Gastrocnemius medialis (tissue), 4 donors: ENCODE measurements at regions of chr10 and their contacts with region 1.

Region 1: DNA sequence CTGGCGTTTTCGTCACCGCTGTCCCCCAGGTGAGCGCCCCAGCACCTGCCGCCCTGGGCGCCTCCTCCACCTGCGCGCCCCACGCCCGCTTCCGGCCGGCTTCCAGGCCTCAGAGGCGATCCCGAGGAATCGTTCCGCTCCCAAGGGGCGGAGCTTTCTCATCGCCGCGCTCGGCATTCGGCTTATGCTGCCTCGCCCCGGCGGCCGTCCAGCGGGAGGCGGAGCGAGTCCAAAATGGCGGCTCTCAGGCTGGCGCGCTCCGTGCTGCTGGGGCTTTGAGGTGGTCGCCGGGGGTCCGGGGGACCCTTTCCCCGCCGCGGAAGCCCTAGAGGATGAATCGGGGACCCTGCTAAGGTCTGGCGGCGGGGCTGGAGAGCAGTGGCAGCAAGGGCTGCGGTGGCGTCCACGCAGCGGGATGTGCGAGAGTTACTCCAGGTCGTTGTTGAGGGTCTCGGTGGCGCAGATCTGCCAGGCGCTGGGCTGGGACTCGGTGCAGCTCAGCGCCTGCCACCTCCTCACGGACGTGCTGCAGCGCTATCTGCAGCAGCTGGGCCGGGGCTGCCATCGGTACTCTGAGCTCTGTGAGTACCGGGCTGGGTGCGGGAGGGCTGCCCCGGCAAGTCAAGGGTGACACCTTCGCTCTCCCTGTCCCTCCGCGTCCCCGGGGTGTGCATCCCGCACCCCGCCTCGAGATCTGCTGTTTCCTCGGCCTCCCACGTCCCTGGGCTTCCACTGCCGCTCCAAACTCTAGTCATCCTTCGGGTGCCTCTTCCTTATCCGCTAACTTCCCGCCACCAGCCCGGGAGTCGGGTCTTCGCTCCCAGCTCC is at the start of gene TAF3:
- DNase-seq: peak; percentile 82 to 87
- ATAC-seq: peak; percentile 92
- H3K4me3 ChIP-seq: peak within 1 kb of the TSS; percentile 74 to 100 (median 98)
- H3K27ac ChIP-seq: peak within 1 kb of the TSS; percentile 80 to 90 (median 82)
- H3K4me1 ChIP-seq: peaks cover 19 to 31% of the 10 kb centered on the region in 2 donors
- H3K27me3 ChIP-seq: no peaks in the 10 kb centered on the region
- CTCF ChIP-seq: no peak
- POLR2A ChIP-seq: peak; percentile 32 to 57
- total RNA-seq, gene TAF3: 5.0 to 14.8 (median 9.6) TPM

Region 2: DNA sequence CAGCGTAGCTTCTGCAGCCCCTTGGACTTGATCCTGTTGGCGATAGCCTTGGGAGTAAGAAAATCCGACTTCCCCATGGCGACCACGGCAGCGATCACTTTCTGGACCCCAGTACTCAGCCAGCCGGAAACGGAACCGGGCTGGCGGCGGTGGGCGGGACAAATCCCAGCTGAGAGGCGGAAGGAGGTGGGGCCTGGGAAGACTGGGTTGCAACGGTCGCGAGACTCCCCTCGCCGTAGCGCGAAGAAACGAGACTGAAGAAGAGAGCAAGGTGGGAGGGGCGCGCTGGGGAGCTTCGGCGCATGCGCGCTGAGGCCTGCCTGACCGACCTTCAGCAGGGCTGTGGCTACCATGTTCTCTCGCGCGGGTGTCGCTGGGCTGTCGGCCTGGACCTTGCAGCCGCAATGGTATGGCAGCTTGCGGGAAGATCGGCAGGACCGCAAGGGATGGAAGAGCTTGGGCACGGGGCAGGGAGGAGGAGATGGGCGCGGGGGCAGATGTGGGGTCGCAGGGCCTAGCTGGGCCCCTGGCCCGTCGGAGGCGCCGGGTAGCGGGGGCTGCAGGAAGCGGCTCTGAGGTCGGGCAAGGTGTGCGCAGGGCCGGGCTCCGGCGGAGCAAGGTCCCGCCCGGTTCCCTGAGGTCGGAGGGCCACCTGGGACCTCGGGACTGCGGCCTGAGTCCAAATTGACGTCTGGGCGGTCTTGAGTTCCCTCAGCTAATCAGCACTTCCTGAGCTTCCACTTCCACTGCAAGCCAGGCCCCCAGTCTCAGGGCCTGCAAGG is 30.5 kb before region 1 on chr10 and contains the starts of genes ATP5F1C and KIN:
- in situ Hi-C with region 1: no loop called
- intact Hi-C with region 1: loop called (anchors 1 kb)
- DNase-seq: peak; percentile 95 to 97
- ATAC-seq: peak; percentile 94 to 98
- H3K4me3 ChIP-seq: peak within 1 kb of the TSS; percentile 86 to 94 (median 92)
- H3K27ac ChIP-seq: peak within 1 kb of the TSS; percentile 85 to 97 (median 94)
- H3K4me1 ChIP-seq: peaks cover 48 to 52% of the 10 kb centered on the region in 2 donors
- H3K27me3 ChIP-seq: no peaks in the 10 kb centered on the region
- CTCF ChIP-seq: peak in 2 of 5 experiments; percentile 8
- POLR2A ChIP-seq: peak; percentile 85 to 88
- total RNA-seq, gene ATP5F1C: 317 to 429 (median 402) TPM
- total RNA-seq, gene KIN: 1.7 to 11.4 (median 8.7) TPM